PC-3 (cell line): ENCODE measurements at regions of chr3 and their contacts with region 1.

Region 1: DNA sequence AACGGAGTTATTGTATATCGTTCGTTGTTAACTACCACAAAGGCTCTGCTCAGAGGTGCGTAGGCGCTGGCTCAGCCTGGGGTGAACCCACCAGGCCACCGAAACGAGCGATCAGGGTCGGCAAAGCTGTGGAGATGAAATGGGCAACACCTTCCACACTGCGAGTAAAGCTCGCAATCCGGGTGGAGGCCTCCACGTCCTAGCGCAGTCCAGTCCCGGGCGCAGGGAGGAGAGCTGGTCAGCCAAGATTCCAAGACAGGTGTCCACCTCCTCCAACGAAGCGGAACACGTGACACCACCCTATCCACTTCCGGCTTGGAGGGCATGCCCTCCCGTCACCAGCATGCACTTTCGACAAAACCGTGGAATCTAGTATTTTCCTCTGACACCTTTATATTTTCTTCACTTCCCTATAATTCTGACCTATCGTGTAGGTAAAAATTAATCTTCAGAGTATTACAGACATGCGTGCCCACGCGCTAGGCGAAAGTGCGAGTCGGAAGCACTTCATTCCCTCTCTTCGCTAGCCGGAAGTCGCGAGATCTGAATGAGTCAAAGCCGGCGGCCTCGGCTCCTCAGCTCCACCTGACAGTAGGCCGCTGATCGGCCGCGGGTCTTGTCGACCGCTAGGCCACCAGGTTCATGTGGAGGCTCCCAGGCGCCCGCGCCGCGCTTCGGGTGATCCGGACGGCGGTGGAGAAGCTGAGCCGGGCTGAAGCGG is at the start of gene PDE12:
- DNase-seq: peak; percentile 89
- ATAC-seq: peak; percentile 76
- H3K4me3 ChIP-seq: peak within 1 kb of the TSS; percentile 85
- H3K27ac ChIP-seq: peak within 1 kb of the TSS; percentile 75
- H3K4me1 ChIP-seq: peaks cover 32% of the 10 kb centered on the region
- H3K27me3 ChIP-seq: no peaks in the 10 kb centered on the region
- CTCF ChIP-seq: no peak
- total RNA-seq, gene PDE12: 25.3 and 32.3 TPM in 2 replicates

Region 2: DNA sequence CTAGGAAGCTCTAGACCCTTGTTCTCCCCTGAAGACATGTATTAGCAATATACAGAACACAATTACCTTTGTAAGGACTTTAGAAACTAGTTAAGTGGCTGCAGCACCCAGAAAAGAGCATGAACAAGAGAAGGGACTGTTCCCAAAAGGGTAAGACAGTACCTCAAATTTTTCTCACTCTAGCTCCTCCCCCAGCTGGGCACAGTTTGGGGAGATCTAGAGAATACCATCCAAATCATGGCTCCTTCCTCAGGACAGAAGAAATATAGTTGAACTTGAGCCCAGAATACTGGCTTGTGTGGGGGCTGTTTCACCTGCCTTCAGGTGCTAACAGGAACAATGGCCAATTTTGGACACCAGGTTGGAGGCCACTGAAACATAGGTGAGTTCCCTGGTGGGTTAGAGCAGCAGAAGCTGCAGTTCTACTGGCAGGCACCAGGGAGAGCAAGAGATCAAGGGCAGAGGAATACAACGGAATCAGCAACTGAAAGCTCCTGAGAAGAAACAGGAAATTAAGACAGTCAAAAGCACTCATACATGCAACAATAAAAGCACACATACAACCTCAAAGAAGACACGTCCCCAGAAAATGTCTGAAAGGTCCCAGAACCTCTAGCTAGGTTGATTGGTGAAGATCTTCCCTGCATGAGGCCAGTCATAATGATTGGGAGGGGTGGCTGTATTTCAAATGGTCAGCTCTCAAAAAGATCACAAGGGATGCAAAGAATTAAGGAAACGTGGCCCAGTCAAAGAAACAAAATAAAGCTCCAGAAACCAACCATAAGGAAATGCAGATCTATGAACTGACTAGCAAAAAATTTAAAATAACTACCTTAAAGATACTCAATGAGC is 158.5 kb before region 1 on chr3:
- CTCF ChIA-PET with region 1: no interaction called
- POLR2A ChIA-PET with region 1: no interaction called
- intact Hi-C with region 1: loop called (anchors 2 kb)
- DNase-seq: peak; percentile 78
- ATAC-seq: peak; percentile 99
- H3K4me3 ChIP-seq: no peak overlapping the region
- H3K27ac ChIP-seq: no peak overlapping the region
- H3K4me1 ChIP-seq: no peaks in the 10 kb centered on the region
- H3K27me3 ChIP-seq: no peaks in the 10 kb centered on the region
- CTCF ChIP-seq: peak; percentile 95

Region 3: GRCh38 chr3:57446318-57446841 is 109.5 kb before region 1 on chr3:
- CTCF ChIA-PET with region 1: no interaction called
- POLR2A ChIA-PET with region 1: interaction called, 5 read pairs
- intact Hi-C with region 1: loop called (anchors 5 kb)
- DNase-seq: no peak
- ATAC-seq: no peak
- H3K4me3 ChIP-seq: 0 out of 2 replicates have a peak overlapping the region, but pooled peaks have one; percentile 17
- H3K27ac ChIP-seq: no peak overlapping the region
- H3K4me1 ChIP-seq: peaks cover 26% of the 10 kb centered on the region
- H3K27me3 ChIP-seq: no peaks in the 10 kb centered on the region
- CTCF ChIP-seq: no peak

Region 4: GRCh38 chr3:57464801-57465200 is 91.1 kb before region 1 on chr3:
- CTCF ChIA-PET with region 1: interaction called, 4 read pairs
- POLR2A ChIA-PET with region 1: no interaction called
- intact Hi-C with region 1: loop called (anchors 5 kb)
- DNase-seq: peak; percentile 53
- ATAC-seq: peak; percentile 84
- H3K4me3 ChIP-seq: no peak overlapping the region
- H3K27ac ChIP-seq: no peak overlapping the region
- H3K4me1 ChIP-seq: no peaks in the 10 kb centered on the region
- H3K27me3 ChIP-seq: no peaks in the 10 kb centered on the region; the same call in 1 of the 2 replicates
- CTCF ChIP-seq: peak; percentile 58

Region 5: GRCh38 chr3:57518266-57518915 is 37.5 kb before region 1 on chr3:
- CTCF ChIA-PET with region 1: no interaction called
- POLR2A ChIA-PET with region 1: no interaction called
- intact Hi-C with region 1: no loop called
- DNase-seq: peak; percentile 42
- ATAC-seq: no peak; the same call in 1 of the 2 replicates
- H3K4me3 ChIP-seq: no peak overlapping the region
- H3K27ac ChIP-seq: no peak overlapping the region
- H3K4me1 ChIP-seq: peaks cover 9% of the 10 kb centered on the region; the same call in 1 of the 2 replicates
- H3K27me3 ChIP-seq: no peaks in the 10 kb centered on the region
- CTCF ChIP-seq: no peak

Region 6: GRCh38 chr3:57530071-57530608 is 25.8 kb before region 1 on chr3:
- CTCF ChIA-PET with region 1: no interaction called
- POLR2A ChIA-PET with region 1: no interaction called
- intact Hi-C with region 1: loop called (anchors 2 kb)
- DNase-seq: peak; percentile 59
- ATAC-seq: peak; percentile 97
- H3K4me3 ChIP-seq: no peak overlapping the region
- H3K27ac ChIP-seq: peak overlapping the region; percentile 10; the same call in 1 of the 2 replicates
- H3K4me1 ChIP-seq: peaks cover 13% of the 10 kb centered on the region
- H3K27me3 ChIP-seq: no peaks in the 10 kb centered on the region
- CTCF ChIP-seq: no peak

Region 7: DNA sequence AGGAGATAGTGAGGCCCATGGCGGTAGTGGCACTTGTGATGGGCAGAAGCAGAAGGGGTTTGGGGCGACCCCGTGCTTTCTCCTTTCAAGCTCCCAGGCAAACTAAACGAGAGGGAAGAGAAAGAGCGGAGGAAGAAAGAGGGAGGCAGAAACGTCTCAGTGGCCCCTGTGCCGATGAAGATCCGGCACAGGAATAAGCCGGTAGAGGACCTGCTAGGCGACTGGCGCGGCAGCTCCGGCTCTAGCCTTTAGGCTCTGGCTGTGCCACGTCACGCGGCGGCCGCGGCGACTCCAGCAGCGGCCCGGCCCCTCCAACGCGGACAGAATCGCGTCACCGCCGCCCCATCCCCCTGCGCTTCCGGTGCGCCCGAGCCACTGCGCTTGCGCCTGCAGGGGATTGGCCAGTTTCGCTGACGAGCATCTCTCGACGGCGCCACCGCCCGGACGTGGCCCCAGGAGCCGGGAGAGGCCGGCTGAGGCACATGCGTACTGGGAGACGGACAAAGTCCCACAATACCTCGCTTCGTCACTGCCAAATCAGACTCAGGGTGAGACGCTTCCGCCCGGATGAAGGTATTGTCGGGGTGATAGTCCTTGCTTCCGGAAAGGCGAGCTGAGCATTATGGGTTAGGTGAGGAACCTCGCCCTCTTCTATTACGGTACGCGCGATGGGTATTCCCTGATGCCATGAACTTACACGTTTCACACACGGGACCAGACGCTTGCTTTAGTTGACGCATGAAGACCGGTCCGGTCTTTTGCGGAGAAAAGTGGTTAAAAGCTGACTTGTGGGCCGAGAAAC is 41.4 kb after region 1 on chr3 and contains the start of gene ARF4:
- CTCF ChIA-PET with region 1: no interaction called
- POLR2A ChIA-PET with region 1: no interaction called
- intact Hi-C with region 1: loop called (anchors 2 kb)
- DNase-seq: peak; percentile 99
- ATAC-seq: peak; percentile 87
- H3K4me3 ChIP-seq: peak within 1 kb of the TSS; percentile 99
- H3K27ac ChIP-seq: peak within 1 kb of the TSS; percentile 93
- H3K4me1 ChIP-seq: peaks cover 28% of the 10 kb centered on the region
- H3K27me3 ChIP-seq: no peaks in the 10 kb centered on the region
- CTCF ChIP-seq: 0 out of 2 replicates have a peak, but pooled peaks have one; percentile 24
- total RNA-seq, gene ARF4: 130 and 135 TPM in 2 replicates